GM12878 (cell line): ENCODE measurements at regions of chr19 and their contacts with region 1.

Region 1: DNA sequence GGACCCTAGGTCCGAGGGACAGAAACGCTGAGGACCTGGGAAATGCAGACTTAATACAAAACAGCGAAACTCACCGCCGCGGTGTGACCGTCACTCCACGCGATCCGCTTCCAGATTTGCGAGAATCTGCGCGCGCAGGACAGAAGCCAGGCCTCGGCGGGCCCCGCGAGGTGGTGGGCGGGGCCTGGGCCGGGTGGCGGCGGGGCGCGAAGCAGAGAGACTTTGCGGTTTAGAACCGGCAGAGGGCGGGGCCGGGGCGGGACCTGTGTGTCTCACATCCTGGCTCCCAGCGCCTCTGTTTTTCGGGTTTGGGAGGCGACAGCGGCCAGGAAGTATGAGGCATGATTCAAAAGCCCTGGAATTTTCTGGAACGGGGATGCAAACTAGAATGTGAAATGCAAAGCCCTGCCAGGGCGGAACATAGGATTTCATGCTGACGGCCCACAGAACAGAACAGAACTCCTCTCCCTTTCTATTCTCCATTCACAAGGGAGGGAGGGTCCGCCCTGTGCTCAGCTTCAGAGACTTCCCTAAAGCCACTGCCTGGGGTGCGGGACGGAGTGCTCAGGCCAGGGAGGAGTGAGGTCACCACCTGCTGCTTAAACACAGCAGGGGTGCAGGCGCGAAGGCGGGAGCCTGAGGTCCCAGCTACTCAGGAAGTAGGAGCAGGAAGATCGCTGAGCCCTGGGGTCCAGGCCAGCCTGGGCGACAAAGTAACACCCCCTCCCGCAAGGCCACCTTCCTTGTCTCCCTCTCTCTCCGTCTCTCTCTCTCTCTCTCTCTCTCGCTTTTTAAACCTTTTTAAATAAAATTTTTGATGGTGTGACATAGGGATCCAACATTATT is 44.3 kb downstream of the ZNF611 start:
- DNase-seq: peak; percentile 45
- ATAC-seq: peak; percentile 85
- H3K4me3 ChIP-seq: peak overlapping the region; percentile 90
- H3K27ac ChIP-seq: peak overlapping the region; percentile 88
- H3K4me1 ChIP-seq: peaks cover 7% of the 10 kb centered on the region
- H3K27me3 ChIP-seq: no peaks in the 10 kb centered on the region
- CTCF ChIP-seq: no peak
- EP300 ChIP-seq: no peak
- POLR2A ChIP-seq: peak; percentile 73
- RAD21 ChIP-seq: no peak

Region 2: DNA sequence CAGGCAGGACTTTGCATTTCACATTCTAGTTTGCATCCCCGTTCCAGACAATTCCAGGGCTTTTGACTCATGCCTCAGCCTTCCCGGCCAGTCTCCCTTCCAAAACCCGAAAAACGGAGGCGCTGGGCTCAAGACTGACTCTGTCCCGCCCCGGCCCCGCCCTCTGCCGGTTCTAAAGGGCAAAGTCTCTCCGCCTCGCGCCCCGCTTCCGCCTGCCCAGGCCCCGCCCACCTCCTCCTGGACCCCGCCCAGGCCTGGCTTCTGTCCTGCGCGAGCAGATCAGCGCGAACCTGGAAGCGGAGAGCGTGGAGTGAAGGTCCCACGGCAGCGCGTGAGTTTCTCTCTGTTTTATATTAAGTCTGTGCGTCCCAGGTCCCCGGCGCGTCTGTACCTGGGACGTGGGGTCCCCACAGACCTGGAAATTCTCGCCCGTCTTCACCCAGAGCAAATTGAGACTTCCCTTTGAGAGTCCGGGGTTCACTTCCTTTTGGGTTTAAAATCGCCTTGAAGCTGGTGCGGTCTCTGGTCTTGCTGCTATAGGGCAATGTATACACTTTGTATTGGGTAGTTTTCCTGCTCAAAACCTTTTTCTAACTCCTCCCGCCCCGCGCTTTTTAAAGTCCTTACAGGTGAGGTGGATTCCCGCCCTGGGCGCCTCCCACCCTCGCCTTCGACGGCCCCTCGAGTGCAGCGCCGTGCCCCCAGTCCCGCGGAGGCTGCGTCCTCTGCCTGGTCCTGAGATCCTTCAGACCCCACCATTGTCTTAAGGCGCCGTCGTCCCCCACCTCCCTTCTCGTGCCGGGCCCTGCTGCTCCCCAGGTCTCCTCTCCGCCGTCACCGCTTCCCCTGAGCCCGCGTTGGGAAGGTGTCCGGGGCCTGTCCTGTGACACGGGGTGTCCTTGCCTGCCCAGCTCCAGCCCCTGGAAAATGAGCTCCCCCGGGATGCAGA is 89.3 kb before region 1 on chr19:
- CTCF ChIA-PET with region 1: no interaction called
- POLR2A ChIA-PET with region 1: interaction called, 4 read pairs
- RAD21 ChIA-PET with region 1: interaction called, 10 read pairs
- SMC1A ChIA-PET with region 1: interaction called, 4 read pairs
- in situ Hi-C with region 1: no loop called
- intact Hi-C with region 1: loop called (anchors 5 kb)
- DNase-seq: peak; percentile 60
- ATAC-seq: peak; percentile 99
- H3K4me3 ChIP-seq: peak overlapping the region; percentile 64
- H3K27ac ChIP-seq: peak overlapping the region; percentile 16
- H3K4me1 ChIP-seq: no peaks in the 10 kb centered on the region
- H3K27me3 ChIP-seq: no peaks in the 10 kb centered on the region
- CTCF ChIP-seq: peak; percentile 29 to 50 (median 32); a peak in 5 of 6 replicates
- EP300 ChIP-seq: no peak
- POLR2A ChIP-seq: peak; percentile 80
- RAD21 ChIP-seq: peak; percentile 27; the same call in 1 of the 2 replicates

Region 3: DNA sequence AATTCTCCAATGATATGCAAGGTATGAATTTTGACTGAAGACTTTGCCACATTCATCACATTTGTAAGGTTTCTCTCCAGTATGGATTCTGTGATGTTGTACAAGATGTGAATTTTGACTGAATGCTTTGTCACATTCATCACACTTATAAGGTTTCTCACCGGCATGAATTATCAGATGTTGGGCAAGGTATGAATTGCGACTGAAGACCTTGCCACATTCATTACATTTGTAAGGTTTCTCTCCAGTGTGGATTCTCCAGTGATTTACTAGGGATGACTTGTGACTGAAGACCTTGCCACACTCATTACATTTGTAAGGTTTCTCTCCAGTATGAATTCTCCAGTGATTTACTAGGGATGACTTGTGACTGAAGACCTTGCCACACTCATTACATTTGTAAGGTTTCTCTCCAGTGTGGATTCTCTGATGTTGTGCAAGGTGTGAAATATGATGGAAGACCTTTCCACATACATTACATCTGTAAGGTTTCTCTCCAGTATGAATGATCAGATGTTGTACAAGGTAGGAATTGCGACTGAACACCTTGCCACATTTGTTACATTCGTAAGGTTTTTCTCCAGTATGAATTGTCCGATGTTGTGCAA is 77.2 kb before region 1 on chr19:
- CTCF ChIA-PET with region 1: no interaction called
- POLR2A ChIA-PET with region 1: no interaction called
- RAD21 ChIA-PET with region 1: no interaction called
- SMC1A ChIA-PET with region 1: no interaction called
- in situ Hi-C with region 1: no loop called
- intact Hi-C with region 1: no loop called
- DNase-seq: no peak
- ATAC-seq: no peak
- H3K4me3 ChIP-seq: no peak overlapping the region
- H3K27ac ChIP-seq: no peak overlapping the region
- H3K4me1 ChIP-seq: no peaks in the 10 kb centered on the region
- H3K27me3 ChIP-seq: no peaks in the 10 kb centered on the region
- CTCF ChIP-seq: no peak
- EP300 ChIP-seq: no peak
- POLR2A ChIP-seq: no peak
- RAD21 ChIP-seq: no peak

Region 4: GRCh38 chr19:52679598-52679997 is 11.0 kb before region 1 on chr19:
- CTCF ChIA-PET with region 1: interaction called, 3 read pairs
- POLR2A ChIA-PET with region 1: interaction called, 11 read pairs
- RAD21 ChIA-PET with region 1: interaction called, 4 read pairs
- SMC1A ChIA-PET with region 1: interaction called, 6 read pairs
- in situ Hi-C with region 1: no loop called
- intact Hi-C with region 1: no loop called
- DNase-seq: no peak
- ATAC-seq: no peak
- H3K4me3 ChIP-seq: no peak overlapping the region
- H3K27ac ChIP-seq: no peak overlapping the region
- H3K4me1 ChIP-seq: no peaks in the 10 kb centered on the region
- H3K27me3 ChIP-seq: no peaks in the 10 kb centered on the region
- CTCF ChIP-seq: no peak
- EP300 ChIP-seq: no peak
- POLR2A ChIP-seq: no peak
- RAD21 ChIP-seq: no peak

Region 5: GRCh38 chr19:52722062-52723003 is 31.7 kb after region 1 on chr19:
- CTCF ChIA-PET with region 1: no interaction called
- POLR2A ChIA-PET with region 1: no interaction called
- RAD21 ChIA-PET with region 1: no interaction called
- SMC1A ChIA-PET with region 1: no interaction called
- in situ Hi-C with region 1: no loop called
- intact Hi-C with region 1: no loop called
- DNase-seq: no peak
- ATAC-seq: no peak
- H3K4me3 ChIP-seq: no peak overlapping the region
- H3K27ac ChIP-seq: no peak overlapping the region
- H3K4me1 ChIP-seq: no peaks in the 10 kb centered on the region
- H3K27me3 ChIP-seq: no peaks in the 10 kb centered on the region
- CTCF ChIP-seq: no peak
- EP300 ChIP-seq: no peak
- POLR2A ChIP-seq: no peak
- RAD21 ChIP-seq: no peak

Region 6: DNA sequence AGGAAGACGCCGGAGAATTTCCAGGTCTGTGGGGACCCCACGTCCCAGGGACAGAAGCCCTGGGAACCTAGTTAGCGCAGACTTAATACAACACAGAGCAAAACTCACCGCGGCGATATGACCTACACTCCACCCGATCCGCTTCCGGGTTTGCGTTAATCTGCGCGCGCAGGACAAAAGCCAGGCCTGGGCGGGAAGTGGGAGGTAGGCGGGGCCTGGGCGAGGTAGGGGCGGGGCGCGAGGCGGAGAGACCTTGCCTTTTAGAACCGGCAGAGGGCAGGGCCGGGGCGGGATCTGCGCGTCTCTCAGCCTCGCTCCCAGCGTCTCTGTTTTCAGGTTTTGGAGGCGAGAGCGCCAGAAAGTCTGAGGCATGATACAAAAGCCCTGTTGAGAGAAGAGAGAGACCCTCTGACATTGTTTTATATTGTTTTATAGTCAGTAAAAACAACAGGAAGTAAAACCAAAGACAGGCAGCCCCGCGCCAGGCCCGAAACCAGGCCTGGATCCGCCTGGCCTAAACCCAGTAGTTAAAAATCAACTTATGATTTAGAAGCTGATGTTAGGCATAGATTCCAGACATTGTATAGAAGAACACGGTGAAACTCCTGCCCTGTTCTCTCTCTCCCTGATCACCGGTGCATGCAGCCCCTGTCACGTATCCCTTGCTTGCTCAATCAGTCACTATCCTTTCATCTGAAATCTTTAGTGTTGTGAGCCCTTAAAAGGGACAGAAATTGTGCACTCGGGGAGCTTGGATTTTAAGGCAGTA is 44.5 kb after region 1 on chr19 and contains the start of gene ZNF611:
- CTCF ChIA-PET with region 1: interaction called, 3 read pairs
- POLR2A ChIA-PET with region 1: no interaction called
- RAD21 ChIA-PET with region 1: no interaction called
- SMC1A ChIA-PET with region 1: interaction called, 6 read pairs
- in situ Hi-C with region 1: no loop called
- intact Hi-C with region 1: loop called (anchors 5 kb)
- DNase-seq: peak; percentile 69
- ATAC-seq: peak; percentile 99
- H3K4me3 ChIP-seq: peak within 1 kb of the TSS; percentile 96
- H3K27ac ChIP-seq: peak within 1 kb of the TSS; percentile 76
- H3K4me1 ChIP-seq: no peaks in the 10 kb centered on the region
- H3K27me3 ChIP-seq: no peaks in the 10 kb centered on the region
- CTCF ChIP-seq: peak in 1 of 3 experiments; percentile 11; a peak in 1 of 6 replicates
- EP300 ChIP-seq: no peak
- POLR2A ChIP-seq: peak; percentile 88
- RAD21 ChIP-seq: no peak
- polyA plus RNA-seq, gene ZNF611: 1.4 to 2.3 TPM

Region 7: DNA sequence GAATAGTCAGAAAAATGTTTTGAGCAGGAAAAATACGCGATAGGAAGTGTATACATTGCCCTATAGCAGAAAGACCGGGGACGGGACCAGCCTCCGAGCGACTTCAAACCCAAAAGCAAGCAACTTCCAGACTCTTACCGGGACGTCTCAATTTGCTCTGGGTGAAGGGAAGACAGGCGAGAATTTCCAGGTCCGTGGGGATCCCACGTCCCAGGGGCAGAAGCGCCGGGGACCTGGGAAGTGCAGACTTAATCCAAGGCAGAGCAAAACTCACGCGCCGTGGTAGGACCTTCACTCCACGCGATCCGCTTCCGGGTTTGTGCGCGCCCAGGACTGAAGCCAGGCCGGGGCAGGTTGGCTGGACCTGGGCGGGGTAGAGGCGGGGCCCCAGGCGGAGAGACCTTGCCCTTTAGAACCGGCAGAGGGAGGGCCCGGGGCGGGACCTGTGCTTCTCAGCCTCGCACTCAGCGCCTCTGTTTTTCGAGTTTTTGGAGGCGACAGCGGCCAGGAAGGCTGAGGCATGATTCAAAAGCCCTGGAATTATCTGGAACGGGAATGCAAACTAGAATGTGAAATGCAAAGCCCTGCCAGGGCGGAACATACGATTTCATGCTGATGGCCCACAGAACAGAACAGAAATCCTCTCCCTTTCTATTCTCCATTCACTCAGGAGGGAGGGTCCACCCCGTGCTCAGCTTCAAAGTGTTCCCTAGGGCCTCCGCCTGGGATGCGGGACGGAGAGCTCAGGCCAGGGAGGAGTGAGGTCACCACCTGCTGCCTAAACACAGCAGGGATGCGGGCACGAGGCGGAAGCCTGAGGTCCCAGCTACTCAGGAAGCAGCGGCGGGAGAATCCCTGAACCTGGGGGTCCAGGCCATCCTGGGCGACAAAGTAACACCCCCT is 96.1 kb after region 1 on chr19 and contains the start of gene ZNF600:
- CTCF ChIA-PET with region 1: no interaction called
- POLR2A ChIA-PET with region 1: no interaction called
- RAD21 ChIA-PET with region 1: no interaction called
- SMC1A ChIA-PET with region 1: no interaction called
- in situ Hi-C with region 1: no loop called
- intact Hi-C with region 1: loop called (anchors 5 kb)
- DNase-seq: peak; percentile 35
- ATAC-seq: peak; percentile 100
- H3K4me3 ChIP-seq: peak within 1 kb of the TSS; percentile 85
- H3K27ac ChIP-seq: peak within 1 kb of the TSS; percentile 74
- H3K4me1 ChIP-seq: no peaks in the 10 kb centered on the region
- H3K27me3 ChIP-seq: no peaks in the 10 kb centered on the region
- CTCF ChIP-seq: peak; percentile 3 to 22 (median 6); a peak in 1 of 6 replicates
- EP300 ChIP-seq: no peak
- POLR2A ChIP-seq: peak; percentile 81
- RAD21 ChIP-seq: no peak
- polyA plus RNA-seq, gene ZNF600: 9.5 to 10.4 TPM